ENCODE measurements at regions of chr2 and their contacts with region 1.

Region 1: GRCh38 chr2:168118733-168119514 is 128.5 kb downstream of the STK39 start:
- DNase-seq: no peak
- ATAC-seq: peak; percentile 92
- H3K4me3 ChIP-seq: no peak overlapping the region
- H3K27ac ChIP-seq: no peak overlapping the region
- H3K4me1 ChIP-seq: no peaks in the 10 kb centered on the region
- H3K27me3 ChIP-seq: 0 out of 4 replicates have a peak, but pooled peaks cover 0 to 6% of the 10 kb centered on the region in 2 experiments
- CTCF ChIP-seq: peak; percentile 51 to 64 (median 58)
- EP300 ChIP-seq: no peak
- POLR2A ChIP-seq: no peak
- RAD21 ChIP-seq: peak; percentile 76

Region 2: DNA sequence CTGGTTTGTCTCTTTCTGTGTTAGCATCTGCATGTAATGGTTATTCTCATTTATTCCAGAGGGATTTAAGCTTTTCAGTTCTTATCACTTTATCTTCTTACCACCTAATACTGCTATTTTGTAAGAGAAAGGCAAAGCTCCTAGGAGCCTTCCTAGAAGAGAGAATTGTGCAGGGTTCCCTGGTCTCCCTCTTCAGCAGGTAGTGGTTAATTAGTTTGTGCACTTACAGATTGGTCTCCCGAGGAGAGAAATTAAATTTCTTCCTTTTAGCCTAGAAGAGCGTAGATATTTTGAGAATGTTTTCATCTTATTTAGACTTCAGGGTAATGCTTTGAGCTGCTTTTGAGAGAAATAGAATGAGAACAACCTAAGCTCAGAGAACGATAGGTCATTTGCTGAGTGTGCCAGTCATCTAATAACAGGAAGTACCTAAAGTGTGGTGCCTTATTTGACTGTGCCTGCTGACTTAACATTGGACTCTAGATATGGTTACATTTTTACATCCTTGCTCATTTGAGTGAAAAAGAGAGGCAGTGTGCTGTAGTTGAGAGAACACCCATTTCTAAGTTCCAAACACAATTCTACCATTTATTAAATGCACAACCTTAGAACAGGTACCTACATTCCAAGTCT is 523.0 kb before region 1 on chr2:
- CTCF ChIA-PET with region 1: no interaction called
- POLR2A ChIA-PET with region 1: no interaction called
- RAD21 ChIA-PET with region 1: no interaction called
- SMC1A ChIA-PET with region 1: no interaction called
- in situ Hi-C with region 1: no loop called
- intact Hi-C with region 1: loop called (anchors 5 kb)
- DNase-seq: no peak
- ATAC-seq: peak; percentile 87
- H3K4me3 ChIP-seq: no peak overlapping the region
- H3K27ac ChIP-seq: no peak overlapping the region
- H3K4me1 ChIP-seq: no peaks in the 10 kb centered on the region
- H3K27me3 ChIP-seq: no peaks in the 10 kb centered on the region
- CTCF ChIP-seq: no peak
- EP300 ChIP-seq: no peak
- POLR2A ChIP-seq: no peak
- RAD21 ChIP-seq: no peak

Region 3: DNA sequence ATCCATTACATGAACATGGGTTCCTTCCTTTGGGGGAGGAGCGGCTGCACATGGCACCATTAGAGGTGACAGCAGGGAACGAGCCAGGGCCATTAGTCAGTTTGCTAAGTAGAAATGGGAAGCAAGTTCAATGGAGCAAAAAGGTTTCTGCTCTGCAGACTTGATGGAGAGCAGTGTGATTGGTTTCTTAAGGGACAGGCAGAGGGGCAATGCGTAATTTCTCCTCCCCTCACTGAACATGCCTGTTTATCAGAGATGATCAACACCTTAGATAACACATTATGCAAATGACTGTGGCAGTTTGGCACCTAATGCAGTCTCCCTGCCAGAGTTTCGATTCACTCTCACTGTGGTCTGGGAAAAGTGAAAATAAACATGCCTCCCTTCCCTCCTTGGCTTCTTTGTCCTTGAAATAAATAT is 286.0 kb before region 1 on chr2:
- CTCF ChIA-PET with region 1: no interaction called
- POLR2A ChIA-PET with region 1: no interaction called
- RAD21 ChIA-PET with region 1: no interaction called
- SMC1A ChIA-PET with region 1: no interaction called
- in situ Hi-C with region 1: no loop called
- intact Hi-C with region 1: no loop called
- DNase-seq: no peak
- ATAC-seq: no peak
- H3K4me3 ChIP-seq: no peak overlapping the region
- H3K27ac ChIP-seq: no peak overlapping the region
- H3K4me1 ChIP-seq: no peaks in the 10 kb centered on the region
- H3K27me3 ChIP-seq: peaks cover 0 to 2% of the 10 kb centered on the region in 2 experiments; a peak in 1 of 4 replicates
- CTCF ChIP-seq: no peak
- EP300 ChIP-seq: no peak
- POLR2A ChIP-seq: no peak
- RAD21 ChIP-seq: no peak

Region 4: GRCh38 chr2:167869200-167869599 is 249.7 kb before region 1 on chr2:
- CTCF ChIA-PET with region 1: interaction called, 7 read pairs
- POLR2A ChIA-PET with region 1: no interaction called
- RAD21 ChIA-PET with region 1: no interaction called
- SMC1A ChIA-PET with region 1: no interaction called
- in situ Hi-C with region 1: no loop called
- intact Hi-C with region 1: loop called (anchors 2 kb)
- DNase-seq: no peak
- ATAC-seq: no peak
- H3K4me3 ChIP-seq: no peak overlapping the region
- H3K27ac ChIP-seq: no peak overlapping the region
- H3K4me1 ChIP-seq: no peaks in the 10 kb centered on the region
- H3K27me3 ChIP-seq: no peaks in the 10 kb centered on the region
- CTCF ChIP-seq: no peak
- EP300 ChIP-seq: no peak
- POLR2A ChIP-seq: no peak
- RAD21 ChIP-seq: no peak

Region 5: GRCh38 chr2:168107322-168107721 is 11.6 kb before region 1 on chr2:
- CTCF ChIA-PET with region 1: interaction called, 57 read pairs
- POLR2A ChIA-PET with region 1: no interaction called
- RAD21 ChIA-PET with region 1: interaction called, 5 read pairs
- SMC1A ChIA-PET with region 1: interaction called, 3 read pairs
- in situ Hi-C with region 1: no loop called
- intact Hi-C with region 1: no loop called
- DNase-seq: no peak
- ATAC-seq: no peak
- H3K4me3 ChIP-seq: no peak overlapping the region
- H3K27ac ChIP-seq: no peak overlapping the region
- H3K4me1 ChIP-seq: no peaks in the 10 kb centered on the region
- H3K27me3 ChIP-seq: no peaks in the 10 kb centered on the region
- CTCF ChIP-seq: no peak
- EP300 ChIP-seq: no peak
- POLR2A ChIP-seq: no peak
- RAD21 ChIP-seq: no peak

Region 6: GRCh38 chr2:168136392-168136977 is 17.6 kb after region 1 on chr2:
- CTCF ChIA-PET with region 1: interaction called, 9 read pairs
- POLR2A ChIA-PET with region 1: no interaction called
- RAD21 ChIA-PET with region 1: no interaction called
- SMC1A ChIA-PET with region 1: interaction called, 10 read pairs
- in situ Hi-C with region 1: no loop called
- intact Hi-C with region 1: no loop called
- DNase-seq: no peak
- ATAC-seq: peak; percentile 58; the same call in 2 of the 3 replicates
- H3K4me3 ChIP-seq: no peak overlapping the region
- H3K27ac ChIP-seq: no peak overlapping the region
- H3K4me1 ChIP-seq: no peaks in the 10 kb centered on the region
- H3K27me3 ChIP-seq: 0 out of 4 replicates have a peak, but pooled peaks cover 0 to 7% of the 10 kb centered on the region in 2 experiments
- CTCF ChIP-seq: peak; percentile 36 to 45 (median 40); a peak in 5 of 6 replicates
- EP300 ChIP-seq: no peak
- POLR2A ChIP-seq: no peak
- RAD21 ChIP-seq: peak; percentile 43

Region 7: DNA sequence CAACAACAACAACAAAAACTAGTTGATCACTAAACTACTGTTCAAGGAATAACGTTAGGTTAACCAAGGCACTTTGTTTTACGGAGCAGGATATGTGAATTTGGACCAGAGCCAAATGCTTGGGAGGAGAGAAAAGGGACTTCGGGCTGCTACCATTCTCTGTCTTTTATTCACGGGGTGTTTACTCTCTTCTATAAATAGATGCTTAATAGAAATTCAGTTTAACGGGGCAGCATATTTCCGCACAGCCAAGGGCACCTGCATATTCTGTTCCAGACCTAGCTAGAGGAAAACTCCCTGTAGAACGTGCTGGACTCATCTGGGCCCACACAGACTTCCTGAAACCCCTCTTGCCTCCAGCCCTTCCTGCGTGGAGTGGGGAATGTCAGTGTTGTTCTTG is 164.3 kb after region 1 on chr2:
- CTCF ChIA-PET with region 1: no interaction called
- POLR2A ChIA-PET with region 1: no interaction called
- RAD21 ChIA-PET with region 1: no interaction called
- SMC1A ChIA-PET with region 1: no interaction called
- in situ Hi-C with region 1: no loop called
- intact Hi-C with region 1: no loop called
- DNase-seq: no peak
- ATAC-seq: no peak
- H3K4me3 ChIP-seq: no peak overlapping the region
- H3K27ac ChIP-seq: no peak overlapping the region
- H3K4me1 ChIP-seq: no peaks in the 10 kb centered on the region
- H3K27me3 ChIP-seq: no peaks in the 10 kb centered on the region
- CTCF ChIP-seq: no peak
- EP300 ChIP-seq: no peak
- POLR2A ChIP-seq: no peak
- RAD21 ChIP-seq: no peak